ENCODE measurements at regions of chr7 and their contacts with region 1.

Region 1: GRCh38 chr7:97016381-97017191 is 8.0 kb downstream of the DLX5 start:
- H3K4me3 ChIP-seq: peak overlapping the region; percentile 41
- H3K27ac ChIP-seq: peak overlapping the region; percentile 92
- H3K4me1 ChIP-seq: peaks cover 8% of the 10 kb centered on the region; the same call in 1 of the 2 replicates
- CTCF ChIP-seq: peak; percentile 97

Region 2: GRCh38 chr7:97006036-97006815 is 10.4 kb before region 1 on chr7:
- CTCF ChIA-PET with region 1: interaction called, 19 read pairs
- POLR2A ChIA-PET with region 1: interaction called, 44 read pairs
- H3K4me3 ChIP-seq: peak overlapping the region; percentile 72
- H3K27ac ChIP-seq: peak overlapping the region; percentile 84
- H3K4me1 ChIP-seq: peaks cover 3% of the 10 kb centered on the region; the same call in 1 of the 2 replicates
- CTCF ChIP-seq: peak; percentile 90

Region 3: GRCh38 chr7:97117372-97118188 is 101.0 kb after region 1 on chr7 and contains the start of gene SDHAF3:
- CTCF ChIA-PET with region 1: no interaction called
- POLR2A ChIA-PET with region 1: no interaction called
- H3K4me3 ChIP-seq: peak within 1 kb of the TSS; percentile 59
- H3K27ac ChIP-seq: peak within 1 kb of the TSS; percentile 61
- H3K4me1 ChIP-seq: no peaks in the 10 kb centered on the region
- CTCF ChIP-seq: peak; percentile 97

Region 4: DNA sequence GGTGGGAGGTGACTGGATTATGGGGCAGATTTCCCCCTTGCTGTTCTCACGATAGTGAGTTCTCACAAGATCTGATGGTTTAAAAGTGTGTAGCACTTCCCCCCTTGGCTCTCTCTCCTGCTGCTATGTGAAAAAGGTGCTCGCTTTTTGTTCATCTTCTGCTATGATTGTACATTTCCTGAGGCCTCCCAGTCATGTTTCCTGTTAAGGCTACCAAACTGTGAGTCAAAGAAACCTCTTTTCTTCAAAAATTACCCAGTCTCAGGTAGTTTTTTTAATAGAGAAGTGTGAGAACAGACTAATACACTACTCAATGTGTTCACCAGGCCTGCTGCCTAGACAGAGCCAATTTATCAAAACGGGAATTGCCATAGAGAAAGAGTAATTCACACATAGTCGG is 150.6 kb after region 1 on chr7:
- CTCF ChIA-PET with region 1: no interaction called
- POLR2A ChIA-PET with region 1: no interaction called
- H3K4me3 ChIP-seq: no peak overlapping the region
- H3K27ac ChIP-seq: no peak overlapping the region
- H3K4me1 ChIP-seq: no peaks in the 10 kb centered on the region
- CTCF ChIP-seq: no peak